Activated T-helper 1 cell treated with anti-CD3 and anti-CD28 coated beads, Interleukin-12 subunit alpha, Interleukin-12 subunit beta, Interleukin-2, Interleukin-4 antibody, amounts not matched to agents 30 ng/mL and 10 ng/mL and 1 ng/mL, durations not matched to agents 14 hours and 24 hours and 36 hours (primary cell): ENCODE measurements at regions of chr1 and their contacts with region 1.

Region 1: DNA sequence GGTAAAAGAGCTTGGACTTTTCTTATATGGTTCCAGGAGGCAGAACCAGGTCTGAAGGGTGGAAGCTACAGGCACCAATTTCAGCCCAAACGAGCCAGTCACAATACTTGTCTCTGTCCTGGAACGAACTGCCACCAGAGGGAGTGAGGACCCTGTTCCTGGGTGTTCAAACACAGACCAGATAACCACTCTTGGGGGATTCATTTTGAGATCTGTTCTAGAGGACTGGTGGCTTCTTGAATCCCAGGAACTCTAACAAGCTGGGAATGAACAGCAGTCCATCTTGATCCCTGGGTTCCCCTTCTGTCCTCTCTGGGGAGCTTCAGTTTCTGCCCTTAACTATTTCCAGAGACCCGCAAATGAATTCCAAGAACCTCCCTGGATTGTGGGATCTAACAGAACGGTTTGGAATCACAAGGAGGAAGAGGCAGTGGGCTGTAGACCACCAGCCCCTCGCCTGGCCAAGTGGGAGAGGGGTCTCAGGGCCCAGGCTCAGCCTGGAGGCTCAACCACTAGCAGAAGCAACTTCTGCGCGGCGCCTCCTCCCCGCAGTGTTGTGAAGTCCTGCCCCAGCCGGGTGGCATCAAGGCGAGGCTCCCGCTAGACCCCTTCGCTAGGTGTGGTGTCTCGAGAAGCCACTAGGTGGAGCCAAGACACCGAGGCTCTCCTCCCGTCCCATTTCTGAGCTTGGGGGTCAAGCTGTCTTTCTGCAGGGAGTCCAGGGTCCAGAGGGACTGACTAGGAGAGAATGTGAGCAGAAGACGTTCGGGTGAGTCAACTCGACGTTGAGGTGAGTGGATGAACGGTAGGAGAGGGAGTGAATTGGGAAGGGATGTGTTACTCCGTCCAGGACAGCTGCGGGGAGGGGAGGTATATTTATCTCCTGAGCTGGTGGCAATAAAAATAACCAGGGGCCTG is 12.1 kb upstream of the NES start:
- DNase-seq: peak; percentile 64
- H3K4me3 Mint-ChIP-seq: peak overlapping the region; percentile 69
- H3K27ac Mint-ChIP-seq: no peak overlapping the region
- H3K4me1 Mint-ChIP-seq: peaks cover 32% of the 10 kb centered on the region
- H3K27me3 Mint-ChIP-seq: peaks cover 54% of the 10 kb centered on the region

Region 2: GRCh38 chr1:156177919-156178654 is 511.2 kb before region 1 on chr1:
- intact Hi-C with region 1: no loop called
- DNase-seq: no peak
- H3K4me3 Mint-ChIP-seq: no peak overlapping the region
- H3K27ac Mint-ChIP-seq: peak overlapping the region; percentile 56
- H3K4me1 Mint-ChIP-seq: peaks cover 18% of the 10 kb centered on the region
- H3K27me3 Mint-ChIP-seq: peaks cover 6% of the 10 kb centered on the region

Region 3: DNA sequence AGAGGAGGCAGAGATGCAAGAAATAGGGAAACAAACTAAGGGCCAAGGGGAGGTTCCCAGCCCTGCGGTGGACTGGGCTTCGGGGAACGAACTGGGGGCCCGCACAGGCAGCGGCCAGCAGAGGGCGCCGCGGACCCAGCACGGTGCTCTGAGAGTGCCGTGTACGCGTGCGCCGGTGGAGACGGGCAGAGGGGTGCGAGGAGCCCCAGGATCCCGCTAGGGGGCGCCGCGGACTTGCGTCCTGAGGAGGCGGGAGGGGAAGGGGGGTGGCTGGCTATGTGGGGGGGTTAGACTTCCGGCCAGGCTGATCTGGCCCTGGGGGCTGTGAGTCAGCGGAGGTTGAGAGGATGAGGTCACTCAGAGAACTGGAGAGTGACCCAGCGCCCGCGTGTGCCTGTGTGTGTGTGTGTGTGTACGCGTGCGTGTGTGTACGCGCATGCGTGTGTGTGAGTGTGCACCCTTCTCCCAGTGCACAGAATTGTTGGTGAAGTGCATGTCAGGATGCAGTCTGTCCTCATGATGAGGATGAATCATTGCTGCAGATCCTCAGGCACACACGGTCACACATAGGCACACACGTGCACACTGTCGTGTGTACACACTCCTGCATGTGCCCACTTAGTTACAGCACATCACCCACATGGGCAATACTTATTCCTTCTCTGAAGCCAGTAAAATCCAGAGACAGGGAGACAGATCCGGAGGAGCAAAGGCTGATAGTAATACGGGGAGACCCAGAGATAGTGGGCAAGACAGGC is 29.1 kb before region 1 on chr1:
- intact Hi-C with region 1: no loop called
- DNase-seq: peak; percentile 88
- H3K4me3 Mint-ChIP-seq: peak overlapping the region; percentile 86
- H3K27ac Mint-ChIP-seq: peak overlapping the region; percentile 89
- H3K4me1 Mint-ChIP-seq: peaks cover 51% of the 10 kb centered on the region
- H3K27me3 Mint-ChIP-seq: peaks cover 25% of the 10 kb centered on the region

Region 4: DNA sequence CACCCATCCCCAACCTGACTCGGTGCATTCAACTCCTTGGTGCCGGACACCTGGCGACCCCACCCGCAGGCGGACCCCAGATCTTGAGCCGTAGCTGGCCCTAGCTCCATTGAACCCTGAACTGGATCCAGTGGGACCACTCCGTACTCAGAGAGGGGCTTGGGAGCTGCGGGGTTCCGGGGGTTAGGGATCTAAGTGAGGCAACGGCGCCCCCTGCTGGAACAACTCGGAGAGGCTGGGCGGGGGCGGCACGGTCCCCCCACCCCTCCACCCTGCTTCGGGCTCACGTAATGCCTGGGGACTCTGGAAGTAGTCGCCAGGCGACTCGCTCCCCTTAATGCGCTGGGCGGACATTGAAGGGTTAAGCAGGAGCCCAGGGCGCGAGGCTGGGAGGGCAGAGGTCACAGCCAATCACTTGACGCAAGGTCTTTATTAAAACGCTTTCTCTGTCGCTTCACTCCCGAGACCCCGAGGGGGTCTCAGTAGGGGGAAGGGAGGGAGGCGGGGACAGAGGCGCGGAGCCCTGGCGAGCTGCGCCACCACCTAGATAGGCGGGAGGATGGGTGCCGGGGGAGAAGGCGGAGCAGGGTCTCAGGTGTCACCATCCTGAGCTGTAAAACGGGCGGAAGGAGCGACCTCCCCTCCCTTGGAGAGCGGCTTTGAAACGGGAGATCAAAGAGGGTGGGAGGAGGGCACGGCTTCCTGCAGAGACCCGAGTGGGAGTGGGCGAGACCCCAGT is 16.8 kb after region 1 on chr1:
- intact Hi-C with region 1: loop called (anchors 1 kb)
- DNase-seq: peak; percentile 47
- H3K4me3 Mint-ChIP-seq: peak overlapping the region; percentile 85
- H3K27ac Mint-ChIP-seq: peak overlapping the region; percentile 29
- H3K4me1 Mint-ChIP-seq: peaks cover 24% of the 10 kb centered on the region
- H3K27me3 Mint-ChIP-seq: peaks cover 43% of the 10 kb centered on the region

Region 5: GRCh38 chr1:156721535-156721934 is 32.2 kb after region 1 on chr1:
- intact Hi-C with region 1: loop called (anchors 1 kb)
- DNase-seq: no peak
- H3K4me3 Mint-ChIP-seq: no peak overlapping the region
- H3K27ac Mint-ChIP-seq: peak overlapping the region; percentile 68
- H3K4me1 Mint-ChIP-seq: peaks cover 23% of the 10 kb centered on the region
- H3K27me3 Mint-ChIP-seq: no peaks in the 10 kb centered on the region